ENCODE measurements at regions of chr1 and their contacts with region 1.

Region 1: GRCh38 chr1:116377541-116378529 is 4.8 kb downstream of the ATP1A1 start:
- DNase-seq: peak; percentile 53 to 90 (median 77)
- H3K4me3 ChIP-seq: peak overlapping the region in 58 of 59 donors; percentile 1 to 97 (median 87)
- H3K27ac ChIP-seq: peak overlapping the region; percentile 45 to 99 (median 95)
- H3K27me3 ChIP-seq: no peaks in the 10 kb centered on the region
- CTCF ChIP-seq: peak in 3 of 56 donors; percentile 9 to 13 (median 10)

Region 2: DNA sequence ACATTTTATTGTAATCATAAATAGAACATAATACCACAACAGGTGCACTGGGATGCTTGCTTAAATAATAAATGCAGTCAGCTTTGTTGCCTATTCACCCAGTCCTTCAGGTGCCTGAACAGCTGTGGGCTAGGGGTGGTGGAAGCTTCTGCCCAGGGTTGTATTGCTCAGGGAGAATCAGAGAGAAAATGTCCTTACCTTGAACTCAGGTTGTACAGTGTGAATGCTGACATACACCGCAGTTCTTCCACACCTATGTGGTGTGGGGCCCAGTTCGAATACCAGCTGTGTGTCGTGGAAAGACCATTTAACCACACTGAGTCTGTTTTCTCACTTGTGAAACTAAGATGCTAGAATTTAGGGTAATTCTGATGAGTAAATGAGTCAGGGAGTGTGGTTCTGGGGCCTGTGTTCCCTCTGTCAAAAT is 120.5 kb before region 1 on chr1:
- intact Hi-C with region 1: no loop called
- DNase-seq: no peak
- H3K4me3 ChIP-seq: no peak overlapping the region
- H3K27ac ChIP-seq: no peak overlapping the region
- H3K27me3 ChIP-seq: no peaks in the 10 kb centered on the region
- CTCF ChIP-seq: no peak

Region 3: GRCh38 chr1:116418091-116418830 is 40.4 kb after region 1 on chr1:
- intact Hi-C with region 1: loop called (anchors 5 kb)
- DNase-seq: peak; percentile 70 to 89 (median 76)
- H3K4me3 ChIP-seq: peak overlapping the region; percentile 60 to 95 (median 82)
- H3K27ac ChIP-seq: peak overlapping the region; percentile 48 to 98 (median 94)
- H3K27me3 ChIP-seq: no peaks in the 10 kb centered on the region
- CTCF ChIP-seq: peak in 40 of 56 donors; percentile 7 to 55 (median 36)